ENCODE measurements at regions of chr9 and their contacts with region 1.

Region 1: GRCh38 chr9:126704873-126705766 is 91.4 kb downstream of the LMX1B start:
- DNase-seq: peak; percentile 89
- ATAC-seq: peak; percentile 71
- H3K4me3 Mint-ChIP-seq: peak overlapping the region; percentile 26
- H3K27ac Mint-ChIP-seq: peak overlapping the region; percentile 4
- H3K4me1 Mint-ChIP-seq: peaks cover 19% of the 10 kb centered on the region
- H3K27me3 Mint-ChIP-seq: peaks cover 16% of the 10 kb centered on the region

Region 2: DNA sequence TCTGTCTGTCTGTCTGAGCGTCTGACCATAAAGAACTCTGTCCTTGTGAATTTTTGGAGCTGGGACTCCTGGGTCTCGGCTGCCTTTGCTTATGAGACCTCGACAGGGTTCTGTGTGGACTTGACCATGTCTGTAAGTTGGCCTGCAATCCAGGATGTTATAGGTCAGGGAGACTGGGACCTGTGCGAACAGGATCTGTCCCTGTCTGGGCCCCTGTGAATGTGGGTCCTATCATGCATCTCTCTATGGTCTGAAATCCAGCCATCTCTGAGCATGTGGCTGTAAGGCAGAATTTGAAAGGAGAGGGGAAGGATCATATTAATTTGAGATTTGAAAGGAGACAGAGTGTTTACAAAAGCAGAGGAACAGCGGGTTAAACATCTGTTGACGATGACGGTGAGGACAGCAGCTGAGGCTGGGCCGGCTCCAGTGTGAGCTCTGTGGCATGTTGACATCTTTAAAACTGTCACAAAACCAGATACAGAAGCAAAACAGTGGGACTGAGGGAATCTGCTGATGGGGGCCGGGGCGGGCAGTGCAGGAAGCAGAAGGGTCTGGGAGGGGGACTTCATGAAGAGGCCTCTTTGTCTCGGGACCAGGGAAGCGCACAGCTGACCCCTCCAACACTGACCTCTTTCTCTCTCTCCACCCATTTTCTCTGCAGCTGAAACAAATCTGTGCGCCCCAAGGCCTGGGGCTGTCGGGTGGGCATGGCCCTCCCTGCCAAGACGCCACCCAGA is 397.6 kb before region 1 on chr9:
- CTCF ChIA-PET with region 1: no interaction called
- POLR2A ChIA-PET with region 1: no interaction called
- DNase-seq: peak; percentile 4
- ATAC-seq: no peak
- H3K4me3 Mint-ChIP-seq: no peak overlapping the region
- H3K27ac Mint-ChIP-seq: no peak overlapping the region
- H3K4me1 Mint-ChIP-seq: peaks cover 9% of the 10 kb centered on the region
- H3K27me3 Mint-ChIP-seq: peaks cover 6% of the 10 kb centered on the region

Region 3: DNA sequence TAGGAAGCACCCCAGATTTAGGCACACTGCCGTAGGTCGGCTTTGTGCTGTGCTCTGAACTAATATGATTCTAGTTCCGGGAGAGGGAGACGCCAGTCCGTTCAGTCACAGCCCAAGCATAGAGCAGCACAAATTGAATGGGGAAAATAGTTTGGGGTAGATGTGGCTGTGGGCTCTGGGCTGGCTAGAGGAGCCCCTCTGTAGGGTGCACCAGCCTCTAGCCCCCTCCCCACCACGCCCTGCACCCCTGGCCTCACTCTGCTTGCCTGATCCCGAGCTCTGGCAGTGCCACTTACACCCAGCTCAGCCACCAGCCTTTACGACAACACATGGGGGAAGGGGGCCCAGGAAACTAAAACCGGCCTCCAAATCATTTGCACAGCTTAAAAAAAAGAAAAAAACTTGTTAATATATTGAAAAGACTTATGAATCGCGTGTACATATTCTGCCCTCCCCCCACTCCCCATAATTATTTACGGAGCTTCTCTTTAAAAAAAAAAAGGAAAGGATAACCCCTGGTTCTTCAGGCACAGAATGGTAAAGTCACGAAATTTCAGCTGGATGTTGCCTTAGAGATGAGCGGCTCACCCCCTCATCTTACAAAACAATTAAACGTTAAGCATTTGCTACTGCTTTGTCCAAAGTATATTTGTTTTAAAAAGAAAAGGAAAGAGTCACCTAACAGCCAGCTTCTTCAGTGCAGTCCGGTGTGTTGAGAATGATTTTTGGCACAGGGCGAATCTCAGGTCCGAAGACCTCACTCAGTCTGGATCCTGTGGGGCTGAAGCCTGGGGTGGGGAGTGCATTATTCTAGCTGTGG is 87.9 kb before region 1 on chr9:
- CTCF ChIA-PET with region 1: no interaction called
- POLR2A ChIA-PET with region 1: no interaction called
- DNase-seq: no peak
- ATAC-seq: no peak
- H3K4me3 Mint-ChIP-seq: no peak overlapping the region
- H3K27ac Mint-ChIP-seq: no peak overlapping the region
- H3K4me1 Mint-ChIP-seq: peaks cover 18% of the 10 kb centered on the region
- H3K27me3 Mint-ChIP-seq: peaks cover 73% of the 10 kb centered on the region

Region 4: DNA sequence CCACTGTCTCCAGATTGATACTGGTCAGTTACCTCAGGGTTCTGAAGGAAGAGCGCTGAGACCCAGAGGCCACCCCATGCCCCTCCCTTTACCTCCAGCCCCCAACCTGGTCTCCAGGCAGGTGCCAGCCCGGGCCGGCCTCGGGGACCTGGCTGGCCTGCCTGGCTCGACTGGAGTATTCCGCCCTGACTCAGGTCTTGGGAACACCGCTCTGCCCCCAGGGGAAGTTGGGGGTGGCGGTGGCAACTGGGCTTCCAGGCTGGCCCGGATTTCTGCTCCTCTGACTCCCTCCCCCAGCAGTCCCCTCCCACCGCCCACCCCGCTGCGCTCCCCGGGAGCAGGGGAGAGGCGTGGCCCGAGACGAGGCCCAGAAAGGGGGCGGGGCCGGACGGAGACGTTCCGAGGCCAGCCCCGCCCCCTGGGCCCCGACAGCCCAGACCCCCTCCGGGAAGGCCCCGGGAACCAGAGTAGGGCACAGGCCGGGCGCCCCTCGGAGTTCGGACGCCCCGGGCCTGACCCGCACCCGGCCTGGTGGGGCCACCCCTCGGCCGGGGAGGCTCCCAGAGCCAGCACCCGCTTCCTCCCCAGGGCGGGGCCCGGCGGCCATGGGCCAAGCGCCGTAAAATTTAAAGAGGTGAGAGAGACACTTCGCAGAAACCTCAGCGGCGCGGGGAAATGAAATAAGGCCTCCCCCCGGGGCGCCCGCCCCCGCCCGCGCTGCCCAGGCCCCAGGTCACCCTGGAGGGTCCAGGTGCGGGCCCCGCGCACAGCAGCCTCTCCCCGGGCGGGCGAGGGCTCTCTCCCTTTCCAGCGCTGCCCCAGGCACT is 17.3 kb after region 1 on chr9:
- CTCF ChIA-PET with region 1: interaction called, 72 read pairs
- POLR2A ChIA-PET with region 1: interaction called, 23 read pairs
- DNase-seq: peak; percentile 91
- ATAC-seq: peak; percentile 56
- H3K4me3 Mint-ChIP-seq: peak overlapping the region; percentile 84
- H3K27ac Mint-ChIP-seq: peak overlapping the region; percentile 98
- H3K4me1 Mint-ChIP-seq: peaks cover 46% of the 10 kb centered on the region
- H3K27me3 Mint-ChIP-seq: peaks cover 7% of the 10 kb centered on the region

Region 5: DNA sequence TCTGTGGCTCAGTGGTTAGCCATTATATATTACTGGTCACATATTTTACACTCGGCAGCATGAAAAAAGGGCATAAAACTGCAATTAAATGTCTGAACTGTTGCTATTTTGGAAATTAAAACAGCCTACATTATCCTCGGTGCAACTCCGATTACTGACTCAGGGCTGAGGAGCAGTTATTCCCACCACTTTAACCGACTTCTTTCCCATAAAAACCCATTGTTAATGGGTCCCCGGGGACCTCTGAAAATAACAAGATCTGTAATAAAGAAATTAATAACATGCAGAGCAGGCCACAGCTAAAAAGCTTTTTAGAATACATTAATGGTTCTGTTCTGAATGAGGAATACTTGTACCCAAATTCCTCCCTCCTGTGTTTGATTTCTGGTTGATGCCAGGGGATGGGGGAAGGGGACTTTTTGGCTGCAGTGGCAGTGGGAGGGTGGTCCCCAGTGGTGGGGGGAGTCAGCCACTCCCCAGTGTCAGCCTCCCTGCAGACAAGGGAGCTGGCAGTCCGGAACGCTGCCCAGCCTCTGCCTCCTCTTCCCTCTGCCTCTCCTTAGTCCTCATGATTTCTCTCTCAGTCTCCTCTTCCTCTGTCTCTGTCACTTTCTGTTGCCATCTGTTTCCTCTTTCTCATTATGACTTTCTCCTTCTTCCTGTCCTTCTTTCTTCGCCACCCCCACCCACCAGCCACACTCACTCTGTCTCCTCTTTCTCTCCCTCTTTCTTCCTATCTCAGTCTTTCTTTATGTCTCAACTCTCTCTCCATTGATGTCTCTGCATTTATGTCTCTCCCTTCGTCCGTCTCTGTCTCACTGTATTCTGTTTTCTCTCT is 40.7 kb after region 1 on chr9:
- CTCF ChIA-PET with region 1: interaction called, 55 read pairs
- POLR2A ChIA-PET with region 1: interaction called, 5 read pairs
- DNase-seq: peak; percentile 35
- ATAC-seq: peak; percentile 24
- H3K4me3 Mint-ChIP-seq: peak overlapping the region; percentile 50
- H3K27ac Mint-ChIP-seq: peak overlapping the region; percentile 82
- H3K4me1 Mint-ChIP-seq: peaks cover 42% of the 10 kb centered on the region
- H3K27me3 Mint-ChIP-seq: peaks cover 1% of the 10 kb centered on the region

Region 6: GRCh38 chr9:126763130-126763764 is 58.1 kb after region 1 on chr9:
- CTCF ChIA-PET with region 1: interaction called, 704 read pairs
- POLR2A ChIA-PET with region 1: no interaction called
- DNase-seq: no peak
- ATAC-seq: no peak
- H3K4me3 Mint-ChIP-seq: no peak overlapping the region
- H3K27ac Mint-ChIP-seq: no peak overlapping the region
- H3K4me1 Mint-ChIP-seq: no peaks in the 10 kb centered on the region
- H3K27me3 Mint-ChIP-seq: peaks cover 2% of the 10 kb centered on the region

Region 7: GRCh38 chr9:126791406-126792151 is 86.5 kb after region 1 on chr9:
- CTCF ChIA-PET with region 1: interaction called, 704 read pairs
- POLR2A ChIA-PET with region 1: no interaction called
- DNase-seq: no peak
- ATAC-seq: no peak
- H3K4me3 Mint-ChIP-seq: no peak overlapping the region
- H3K27ac Mint-ChIP-seq: no peak overlapping the region
- H3K4me1 Mint-ChIP-seq: no peaks in the 10 kb centered on the region
- H3K27me3 Mint-ChIP-seq: peaks cover 51% of the 10 kb centered on the region

Region 8: GRCh38 chr9:127083138-127083980 is 378.2 kb after region 1 on chr9:
- CTCF ChIA-PET with region 1: no interaction called
- POLR2A ChIA-PET with region 1: no interaction called
- DNase-seq: no peak
- ATAC-seq: no peak
- H3K4me3 Mint-ChIP-seq: no peak overlapping the region
- H3K27ac Mint-ChIP-seq: no peak overlapping the region
- H3K4me1 Mint-ChIP-seq: peaks cover 15% of the 10 kb centered on the region
- H3K27me3 Mint-ChIP-seq: no peaks in the 10 kb centered on the region

Measured in activated CD8-positive, alpha-beta T cell treated with anti-CD3 and anti-CD28 coated beads, Interleukin-2, amount 10 ng/mL, durations not matched to agents 7 days and 5 days (primary cell).